Common myeloid progenitor, CD34-positive (primary cell): ENCODE measurements at regions of chr15 and their contacts with region 1.

Region 1: DNA sequence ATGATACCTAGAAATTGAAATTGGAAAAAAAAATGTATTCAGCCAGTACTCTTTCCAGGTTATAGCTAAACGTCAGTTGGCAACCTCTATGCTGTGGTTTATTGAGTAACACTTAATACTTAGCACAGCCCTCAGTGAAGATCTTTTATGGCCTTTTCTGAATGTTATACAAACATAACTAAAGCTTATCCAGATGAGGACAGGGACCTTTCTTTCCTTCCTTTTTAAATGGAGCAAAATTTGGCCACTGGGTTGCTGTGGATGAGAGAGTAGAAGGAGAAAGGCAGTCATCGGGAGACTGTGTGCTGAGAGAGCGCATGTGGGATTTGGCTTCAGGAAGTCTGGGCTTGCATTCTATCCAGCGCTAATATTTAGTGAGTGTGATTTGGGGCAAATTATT is 36.1 kb downstream of the IGF1R start:
- DNase-seq: peak in 2 of 3 donors; percentile 31 to 41
- H3K4me3 ChIP-seq: peak overlapping the region in 1 of 7 experiments; percentile 41
- H3K27ac ChIP-seq: no peak overlapping the region
- H3K4me1 ChIP-seq: peaks cover 0 to 40% (median 21%) of the 10 kb centered on the region in 4 experiments
- H3K27me3 ChIP-seq: no peaks in the 10 kb centered on the region

Region 2: GRCh38 chr15:98658831-98659699 is 25.4 kb before region 1 on chr15:
- CTCF ChIA-PET with region 1: interaction called, 11 read pairs
- POLR2A ChIA-PET with region 1: no interaction called
- DNase-seq: peak; percentile 44 to 53 (median 49)
- H3K4me3 ChIP-seq: no peak overlapping the region
- H3K27ac ChIP-seq: no peak overlapping the region
- H3K4me1 ChIP-seq: peaks cover 0 to 4% (median 1%) of the 10 kb centered on the region in 4 experiments
- H3K27me3 ChIP-seq: no peaks in the 10 kb centered on the region